ENCODE measurements at regions of chr12 and their contacts with region 1.

Region 1: GRCh38 chr12:118372541-118373495 is at the start of gene TAOK3:
- DNase-seq: peak; percentile 98 to 99 (median 99)
- ATAC-seq: peak; percentile 93 to 97 (median 96)
- H3K4me3 ChIP-seq: peak within 1 kb of the TSS; percentile 70 to 97 (median 90)
- H3K27ac ChIP-seq: peak within 1 kb of the TSS; percentile 45 to 98 (median 94)
- H3K4me1 ChIP-seq: peaks cover 0 to 60% (median 33%) of the 10 kb centered on the region in 12 donors
- H3K27me3 ChIP-seq: no peaks in the 10 kb centered on the region
- CTCF ChIP-seq: peak in 1 of 12 donors; percentile 18
- POLR2A ChIP-seq: peak; percentile 74 to 97
- total RNA-seq, gene TAOK3: 11.8 to 26.6 (median 22.2) TPM

Region 2: DNA sequence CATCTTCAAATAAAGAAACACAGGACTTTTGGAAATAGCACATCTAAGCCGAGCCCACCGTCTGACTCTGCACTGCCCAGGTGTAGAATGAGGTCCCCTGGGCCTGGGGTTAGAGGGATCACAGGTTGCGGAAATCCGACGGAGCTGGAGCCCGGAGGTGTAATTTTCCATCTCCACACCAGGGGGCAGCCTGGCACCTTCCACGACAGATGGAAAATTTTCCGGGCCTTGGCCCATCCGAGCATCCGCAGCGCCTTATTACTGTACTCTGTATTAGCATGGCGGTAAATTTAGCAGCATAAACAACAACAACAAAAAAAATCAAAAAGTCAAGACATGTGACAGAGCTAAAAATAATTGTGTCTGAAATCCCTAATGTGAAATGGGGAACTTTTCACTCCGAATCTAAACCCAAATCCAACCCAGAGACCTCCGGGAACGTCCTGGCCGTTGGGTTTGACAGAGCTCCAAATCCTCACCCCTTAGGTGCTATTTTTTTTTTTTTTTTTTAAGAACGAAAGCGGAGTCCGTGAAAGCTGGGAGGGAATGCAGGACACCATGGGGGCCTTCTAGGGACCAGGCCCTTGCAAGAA is 497.9 kb before region 1 on chr12:
- intact Hi-C with region 1: loop called in 5 of 10 experiments (anchors 5 to 10 kb)
- DNase-seq: peak; percentile 58 to 76 (median 61)
- ATAC-seq: peak; percentile 61 to 93 (median 78)
- H3K4me3 ChIP-seq: no peak overlapping the region
- H3K27ac ChIP-seq: no peak overlapping the region
- H3K4me1 ChIP-seq: peaks cover 0 to 5% (median 0%) of the 10 kb centered on the region in 12 donors
- H3K27me3 ChIP-seq: peaks cover 0 to 40% (median 17%) of the 10 kb centered on the region in 9 donors
- CTCF ChIP-seq: peak; percentile 75 to 92 (median 84)
- POLR2A ChIP-seq: no peak

Region 3: DNA sequence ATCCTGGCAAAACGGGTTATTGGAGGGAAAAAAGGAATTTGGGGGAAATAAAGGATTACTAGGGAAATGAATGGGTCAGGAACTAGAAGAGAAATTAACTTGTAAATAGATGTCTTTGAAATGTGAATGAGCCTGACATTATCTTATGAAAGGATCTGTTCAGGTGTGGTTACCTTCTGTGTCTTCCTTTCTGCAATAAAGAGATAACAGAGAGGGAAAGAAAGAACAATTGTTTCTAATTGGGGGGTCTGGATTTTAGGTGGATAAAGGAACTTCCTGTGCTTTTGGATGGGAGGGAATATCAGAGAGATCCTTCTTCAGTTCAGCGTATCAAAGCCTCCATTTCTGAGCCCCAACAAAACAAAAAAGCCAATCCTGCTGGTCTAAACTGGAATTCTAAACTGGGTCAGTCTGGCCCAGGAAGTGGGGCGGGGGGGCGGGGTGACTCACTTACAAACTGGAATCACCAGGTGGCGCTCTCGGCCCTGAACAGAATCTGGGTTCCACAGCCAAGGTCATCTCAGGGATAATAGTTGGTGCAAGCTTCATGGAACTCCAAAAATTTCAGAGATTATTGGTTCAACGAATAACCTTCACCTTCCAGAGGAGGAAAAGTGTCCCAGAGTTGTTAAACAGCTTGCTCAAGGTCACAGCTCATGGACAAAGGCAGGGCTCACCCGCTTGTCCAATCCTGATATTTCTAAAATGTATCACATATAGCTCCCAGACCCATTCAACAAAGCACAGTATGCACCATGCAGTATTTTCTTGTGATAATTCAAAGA is 252.0 kb before region 1 on chr12:
- intact Hi-C with region 1: loop called in 7 of 10 experiments (anchors 1 to 5 kb)
- DNase-seq: peak; percentile 69 to 79 (median 72)
- ATAC-seq: peak; percentile 78 to 93 (median 86)
- H3K4me3 ChIP-seq: no peak overlapping the region
- H3K27ac ChIP-seq: peak overlapping the region in 10 of 12 donors; percentile 35 to 78 (median 62)
- H3K4me1 ChIP-seq: peaks cover 0 to 11% (median 6%) of the 10 kb centered on the region in 12 donors
- H3K27me3 ChIP-seq: no peaks in the 10 kb centered on the region
- CTCF ChIP-seq: peak; percentile 62 to 89 (median 79)
- POLR2A ChIP-seq: no peak

Region 4: GRCh38 chr12:118175823-118176447 is 196.9 kb before region 1 on chr12:
- intact Hi-C with region 1: loop called in 3 of 10 experiments (anchors 2 to 5 kb)
- DNase-seq: no peak
- ATAC-seq: peak in 2 of 4 donors; percentile 41 to 55
- H3K4me3 ChIP-seq: no peak overlapping the region
- H3K27ac ChIP-seq: no peak overlapping the region
- H3K4me1 ChIP-seq: peaks cover 0 to 6% (median 0%) of the 10 kb centered on the region in 12 donors
- H3K27me3 ChIP-seq: no peaks in the 10 kb centered on the region
- CTCF ChIP-seq: no peak
- POLR2A ChIP-seq: no peak

Region 5: DNA sequence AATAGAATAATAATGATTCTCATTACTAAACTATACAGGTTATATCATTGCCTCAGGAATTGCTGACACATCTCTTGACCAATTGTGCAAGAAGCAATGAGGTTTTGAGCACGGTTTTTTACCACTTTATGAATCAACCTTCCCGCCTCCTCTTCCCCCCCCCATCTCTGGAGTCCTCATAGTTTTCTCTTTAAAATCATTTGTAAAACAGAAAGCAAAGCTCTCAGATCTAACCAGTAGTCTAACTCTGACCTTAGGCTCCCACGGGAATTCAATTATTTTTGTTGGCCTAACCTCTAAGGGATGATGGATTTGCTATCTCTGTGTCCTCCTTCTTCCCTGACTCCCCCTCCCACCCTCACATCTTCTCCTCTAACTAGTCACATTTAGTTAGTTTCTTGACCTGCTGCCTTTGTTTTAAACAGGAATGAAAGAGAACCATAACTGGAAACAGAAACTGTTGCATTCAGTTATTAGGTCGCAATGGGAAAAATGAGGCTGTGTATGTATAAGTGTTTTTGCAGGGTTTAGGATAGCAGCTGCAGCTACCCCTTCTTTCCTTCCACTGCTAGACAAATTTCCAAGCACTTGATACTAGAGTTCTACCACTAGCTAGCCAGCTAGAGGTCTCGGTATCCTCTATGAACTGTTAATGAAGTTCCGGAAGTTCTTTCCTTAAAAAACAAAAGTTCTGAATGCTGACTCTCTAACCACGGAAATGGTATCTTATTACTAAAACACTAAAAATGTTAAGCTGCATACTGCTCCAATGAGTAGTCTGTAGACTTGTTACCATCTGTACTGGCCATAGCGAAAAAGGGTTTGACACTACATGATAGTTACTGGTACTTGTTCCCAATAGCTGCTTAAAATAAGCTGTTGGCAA is 65.5 kb before region 1 on chr12:
- intact Hi-C with region 1: loop called in 1 of 10 experiments (anchors 1 kb)
- DNase-seq: peak in 2 of 5 donors; percentile 20 to 32
- ATAC-seq: peak; percentile 57 to 72 (median 66)
- H3K4me3 ChIP-seq: peak overlapping the region in 7 of 12 donors; percentile 12 to 40 (median 32)
- H3K27ac ChIP-seq: peak overlapping the region in 5 of 12 donors; percentile 15 to 82 (median 35)
- H3K4me1 ChIP-seq: peaks cover 0 to 47% (median 10%) of the 10 kb centered on the region in 12 donors
- H3K27me3 ChIP-seq: no peaks in the 10 kb centered on the region
- CTCF ChIP-seq: no peak
- POLR2A ChIP-seq: no peak